ENCODE measurements at regions of chr16 and their contacts with region 1.

Region 1: GRCh38 chr16:47141773-47142485 is 1.8 kb downstream of the NETO2 start:
- DNase-seq: peak; percentile 96
- H3K4me3 Mint-ChIP-seq: peak overlapping the region; percentile 84
- H3K27ac Mint-ChIP-seq: peak overlapping the region; percentile 51
- H3K4me1 Mint-ChIP-seq: peaks cover 34% of the 10 kb centered on the region
- H3K27me3 Mint-ChIP-seq: peaks cover 18% of the 10 kb centered on the region

Region 2: GRCh38 chr16:46973207-46973995 is 168.5 kb before region 1 on chr16 and contains the start of gene DNAJA2:
- intact Hi-C with region 1: loop called (anchors 1 kb)
- DNase-seq: peak; percentile 97
- H3K4me3 Mint-ChIP-seq: peak within 1 kb of the TSS; percentile 98
- H3K27ac Mint-ChIP-seq: peak within 1 kb of the TSS; percentile 98
- H3K4me1 Mint-ChIP-seq: peaks cover 48% of the 10 kb centered on the region
- H3K27me3 Mint-ChIP-seq: no peaks in the 10 kb centered on the region
- total RNA-seq, gene DNAJA2: 81.7 and 84.2 TPM in 2 replicates

Region 3: DNA sequence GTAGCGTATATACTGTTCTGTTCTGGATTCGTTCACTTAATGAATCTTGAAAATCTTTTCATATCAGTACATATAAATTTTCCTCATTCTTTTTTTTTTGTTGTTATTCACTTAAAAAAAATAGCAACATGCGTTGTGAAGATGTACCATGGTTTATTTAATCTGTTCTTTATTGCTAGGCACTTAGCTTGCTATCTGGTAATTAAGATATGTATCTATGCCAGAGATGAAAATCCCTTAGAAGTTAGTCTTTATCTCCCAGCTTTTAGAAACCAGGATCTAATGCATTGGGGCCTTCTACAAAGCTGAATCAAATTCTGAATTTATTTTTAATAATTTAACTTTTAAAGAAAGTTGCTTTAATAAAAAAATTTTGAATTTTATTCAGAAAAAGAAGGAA is 155.5 kb before region 1 on chr16:
- intact Hi-C with region 1: no loop called
- DNase-seq: no peak
- H3K4me3 Mint-ChIP-seq: no peak overlapping the region
- H3K27ac Mint-ChIP-seq: no peak overlapping the region
- H3K4me1 Mint-ChIP-seq: no peaks in the 10 kb centered on the region
- H3K27me3 Mint-ChIP-seq: peaks cover 2% of the 10 kb centered on the region

Region 4: DNA sequence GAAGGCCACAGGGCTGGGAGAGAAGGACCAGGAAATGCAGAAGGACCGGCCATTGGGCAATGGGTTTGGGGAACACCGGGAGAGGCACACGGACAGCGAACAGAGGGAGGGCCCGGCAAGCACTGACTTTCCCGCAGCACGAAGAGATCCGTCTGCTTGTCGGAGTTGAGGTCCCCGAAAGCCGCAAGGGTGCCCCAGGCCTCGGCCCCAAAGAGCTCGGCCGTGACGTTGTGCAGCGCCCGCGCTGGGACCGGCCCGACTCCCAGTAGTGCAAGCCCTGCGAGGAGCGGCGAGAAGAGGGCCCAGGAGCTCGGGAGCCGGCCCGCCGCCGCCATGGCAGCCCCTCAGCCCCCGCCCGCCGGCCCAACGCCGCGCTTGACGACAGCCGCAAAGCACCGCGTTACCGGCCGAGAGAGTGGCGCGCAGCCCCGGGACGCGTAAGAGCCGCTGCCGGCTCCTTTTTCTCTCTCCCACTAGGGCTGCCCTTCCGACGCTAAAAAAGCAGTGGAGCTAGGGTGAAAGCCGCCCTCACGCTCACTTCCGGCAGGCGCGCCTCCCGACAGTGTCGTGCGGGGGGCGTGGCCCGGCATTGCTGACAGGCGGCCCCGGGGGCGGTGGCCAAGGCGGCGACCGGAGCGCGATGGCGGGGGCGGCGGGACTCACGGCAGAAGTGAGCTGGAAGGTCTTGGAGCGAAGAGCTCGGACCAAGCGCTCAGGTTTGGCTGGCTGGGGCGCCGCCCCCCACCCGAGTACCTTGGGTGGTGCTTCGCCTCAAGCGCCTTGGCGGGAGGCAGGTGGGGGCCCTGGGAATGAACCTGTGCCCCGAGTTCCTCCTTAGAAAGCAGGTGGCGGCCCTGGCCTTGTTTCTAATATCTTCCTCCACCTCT is 319.0 kb after region 1 on chr16 and contains the starts of genes ITFG1 and PHKB:
- intact Hi-C with region 1: loop called (anchors 2 kb)
- DNase-seq: peak; percentile 99
- H3K4me3 Mint-ChIP-seq: peak within 1 kb of the TSS; percentile 94
- H3K27ac Mint-ChIP-seq: peak within 1 kb of the TSS; percentile 97
- H3K4me1 Mint-ChIP-seq: peaks cover 36% of the 10 kb centered on the region
- H3K27me3 Mint-ChIP-seq: no peaks in the 10 kb centered on the region
- total RNA-seq, gene ITFG1: 26.1 and 28.5 TPM in 2 replicates
- total RNA-seq, gene PHKB: 23.7 and 27.9 TPM in 2 replicates

Region 5: GRCh38 chr16:48054881-48055601 is 913.1 kb after region 1 on chr16:
- intact Hi-C with region 1: loop called (anchors 1 kb)
- DNase-seq: peak; percentile 80
- H3K4me3 Mint-ChIP-seq: no peak overlapping the region
- H3K27ac Mint-ChIP-seq: no peak overlapping the region
- H3K4me1 Mint-ChIP-seq: no peaks in the 10 kb centered on the region
- H3K27me3 Mint-ChIP-seq: peaks cover 16% of the 10 kb centered on the region

Region 6: DNA sequence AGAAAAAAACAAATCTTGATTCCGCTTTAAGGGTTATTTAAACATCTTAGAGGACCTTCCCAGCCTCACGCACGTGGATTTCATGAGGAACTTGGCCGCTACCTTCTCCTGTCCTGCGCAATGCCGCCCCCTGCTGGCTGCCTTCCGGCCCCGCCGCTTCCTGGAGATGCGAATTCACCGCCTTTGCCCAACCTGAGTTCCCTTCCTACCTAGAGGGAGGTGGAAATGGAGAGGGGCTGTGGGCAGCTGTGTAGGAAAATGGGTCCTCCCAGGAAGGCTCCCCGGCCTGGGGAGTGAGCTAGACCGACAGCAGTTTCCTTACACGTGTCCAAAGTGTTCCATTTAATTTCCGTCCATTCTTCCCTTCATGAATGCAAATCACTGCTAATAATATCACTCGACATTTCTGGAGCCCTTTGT is 1014.9 kb after region 1 on chr16:
- intact Hi-C with region 1: loop called (anchors 1 kb)
- DNase-seq: peak; percentile 95
- H3K4me3 Mint-ChIP-seq: peak overlapping the region; percentile 32
- H3K27ac Mint-ChIP-seq: peak overlapping the region; percentile 68
- H3K4me1 Mint-ChIP-seq: peaks cover 32% of the 10 kb centered on the region
- H3K27me3 Mint-ChIP-seq: peaks cover 20% of the 10 kb centered on the region

Region 7: GRCh38 chr16:48632137-48632774 is 1490.3 kb after region 1 on chr16:
- intact Hi-C with region 1: loop called (anchors 5 kb)
- DNase-seq: peak; percentile 48
- H3K4me3 Mint-ChIP-seq: no peak overlapping the region
- H3K27ac Mint-ChIP-seq: no peak overlapping the region
- H3K4me1 Mint-ChIP-seq: peaks cover 7% of the 10 kb centered on the region
- H3K27me3 Mint-ChIP-seq: peaks cover 2% of the 10 kb centered on the region

Measured in activated CD4-positive, alpha-beta T cell treated with anti-CD3 and anti-CD28 coated beads, Interleukin-2, amount 10 ng/mL, durations not matched to agents 24 days and 14 days (primary cell).